Psoas muscle (tissue), 8 donors: ENCODE measurements at regions of chr6 and their contacts with region 1.

Region 1: DNA sequence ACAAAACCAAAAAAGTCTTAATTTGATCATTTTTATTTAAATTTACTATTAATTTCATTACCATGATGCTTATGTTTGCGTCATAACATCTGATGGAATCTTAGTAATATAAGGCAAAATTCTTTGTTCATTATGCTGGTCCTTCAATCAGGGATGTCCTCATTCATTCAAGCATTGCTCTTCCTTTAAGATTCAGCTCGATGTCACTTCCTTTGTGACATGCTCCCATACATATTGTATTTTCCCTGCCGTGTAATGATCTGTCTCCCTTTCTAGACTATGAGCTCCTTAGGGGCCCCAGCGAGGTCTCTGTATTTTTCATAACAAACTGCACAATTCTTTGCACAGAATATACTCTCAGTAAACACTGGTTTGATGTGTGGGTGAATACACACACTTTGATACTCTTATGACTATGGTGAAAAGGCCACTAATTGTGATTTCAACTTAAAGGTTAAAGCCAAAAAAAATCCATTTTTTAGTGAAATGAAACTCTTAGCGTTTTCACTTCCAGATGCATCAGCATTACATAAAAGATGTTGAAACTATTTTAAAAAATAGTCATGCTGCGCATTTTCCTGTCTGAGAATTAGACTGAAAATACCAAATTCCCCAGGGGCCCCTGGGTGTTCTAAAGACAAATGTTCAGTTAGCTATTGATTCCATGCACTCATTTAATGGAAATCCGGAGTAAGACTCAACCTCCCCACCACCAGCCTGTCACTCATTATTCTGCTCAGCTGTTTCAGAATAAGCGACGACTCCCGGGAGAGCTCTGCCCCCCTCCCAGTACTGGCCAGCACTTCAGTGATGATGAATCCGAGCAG is 169.7 kb downstream of the ATXN1 start:
- DNase-seq: no peak
- ATAC-seq: no peak
- H3K4me3 ChIP-seq: no peak overlapping the region
- H3K27ac ChIP-seq: no peak overlapping the region
- H3K4me1 ChIP-seq: no peaks in the 10 kb centered on the region
- H3K27me3 ChIP-seq: no peaks in the 10 kb centered on the region
- CTCF ChIP-seq: no peak

Region 2: GRCh38 chr6:16438718-16439591 is 152.7 kb before region 1 on chr6:
- intact Hi-C with region 1: no loop called
- DNase-seq: no peak
- ATAC-seq: peak; percentile 56 to 84 (median 72)
- H3K4me3 ChIP-seq: no peak overlapping the region
- H3K27ac ChIP-seq: peak overlapping the region; percentile 54
- H3K4me1 ChIP-seq: peaks cover 22% of the 10 kb centered on the region
- H3K27me3 ChIP-seq: no peaks in the 10 kb centered on the region
- CTCF ChIP-seq: no peak

Region 3: DNA sequence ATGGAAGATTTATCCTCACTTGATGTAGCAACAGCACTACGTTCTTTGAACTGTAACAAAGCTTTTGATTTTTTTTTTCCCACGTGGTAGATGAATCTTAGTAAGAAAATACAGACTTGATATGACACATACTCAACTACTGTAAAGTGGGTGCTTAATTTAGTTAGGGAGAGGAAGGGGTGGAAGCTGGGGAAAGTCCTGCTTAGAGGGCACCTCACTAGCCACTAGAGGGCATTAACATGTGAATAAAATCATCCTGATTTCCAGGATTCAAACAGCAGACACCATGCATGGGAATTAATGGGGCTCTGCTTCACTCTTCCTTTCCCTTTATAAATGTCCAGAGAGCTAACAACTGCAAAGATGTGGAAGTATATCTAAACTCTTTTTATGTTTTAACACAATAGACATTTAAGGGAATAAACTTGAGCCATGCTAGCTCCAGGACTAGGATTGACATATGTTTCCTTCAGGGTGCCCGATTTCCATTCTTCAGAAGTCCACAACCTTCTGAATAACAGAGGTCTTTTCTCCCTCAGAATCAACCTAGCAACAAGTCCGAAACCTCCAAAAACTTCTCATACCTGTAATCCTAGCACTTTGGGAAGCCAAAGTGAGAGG is 80.5 kb before region 1 on chr6:
- intact Hi-C with region 1: no loop called
- DNase-seq: no peak
- ATAC-seq: peak; percentile 51 to 70 (median 62)
- H3K4me3 ChIP-seq: no peak overlapping the region
- H3K27ac ChIP-seq: no peak overlapping the region
- H3K4me1 ChIP-seq: peaks cover 41% of the 10 kb centered on the region
- H3K27me3 ChIP-seq: no peaks in the 10 kb centered on the region
- CTCF ChIP-seq: peak; percentile 58

Region 4: DNA sequence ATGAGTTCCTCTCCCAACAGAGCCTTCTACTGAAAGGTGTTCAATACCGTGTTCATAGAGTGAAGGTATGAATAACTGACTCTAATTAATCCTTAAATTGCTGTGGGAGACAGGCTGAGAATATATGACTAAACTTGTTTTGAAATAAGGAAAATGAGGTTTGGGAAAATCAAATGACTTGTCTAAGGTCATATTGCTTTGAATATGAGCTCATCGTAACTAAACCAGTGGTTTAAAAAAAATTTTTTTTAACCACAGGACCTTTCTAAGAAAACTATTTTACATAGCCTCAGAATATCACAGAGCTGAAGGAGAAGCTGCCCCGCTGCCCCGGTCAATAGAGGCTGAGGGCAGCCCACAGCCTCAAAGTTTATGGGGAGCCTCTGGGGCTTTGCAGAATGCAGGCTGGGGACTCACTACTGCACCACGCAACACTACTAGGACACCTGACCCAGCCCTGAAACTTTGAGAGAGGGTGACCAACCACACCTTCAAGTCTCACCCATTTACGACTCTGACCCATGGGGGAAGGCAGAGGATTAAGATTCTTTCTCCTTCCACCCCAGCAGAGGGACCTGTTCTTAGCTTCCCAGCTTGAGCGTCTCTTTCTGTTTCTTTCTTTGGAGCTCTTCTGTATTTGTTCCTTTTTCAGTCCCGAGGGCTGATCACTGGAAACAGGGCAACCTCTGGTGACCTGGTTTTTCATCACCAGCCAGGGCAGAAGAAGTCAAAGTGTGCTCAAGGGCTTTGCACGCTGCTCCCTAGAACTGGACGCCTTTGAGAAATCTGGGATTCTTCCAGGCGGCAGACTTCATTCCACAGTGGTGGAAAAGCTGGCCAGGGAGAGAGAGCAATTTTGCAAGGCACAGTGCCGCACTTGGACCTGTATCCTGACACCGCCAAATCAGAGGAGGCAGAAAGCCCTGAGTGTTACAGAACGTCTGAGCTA is 50.5 kb before region 1 on chr6:
- intact Hi-C with region 1: no loop called
- DNase-seq: peak; percentile 31 to 63
- ATAC-seq: peak; percentile 55 to 75 (median 72)
- H3K4me3 ChIP-seq: no peak overlapping the region
- H3K27ac ChIP-seq: peak overlapping the region; percentile 43
- H3K4me1 ChIP-seq: peaks cover 36% of the 10 kb centered on the region
- H3K27me3 ChIP-seq: no peaks in the 10 kb centered on the region
- CTCF ChIP-seq: no peak

Region 5: GRCh38 chr6:16559071-16559470 is 32.5 kb before region 1 on chr6:
- intact Hi-C with region 1: loop called in 1 of 2 experiments (anchors 2 kb)
- DNase-seq: no peak
- ATAC-seq: peak in 2 of 4 donors; percentile 45 to 62
- H3K4me3 ChIP-seq: no peak overlapping the region
- H3K27ac ChIP-seq: no peak overlapping the region
- H3K4me1 ChIP-seq: peaks cover 17% of the 10 kb centered on the region
- H3K27me3 ChIP-seq: no peaks in the 10 kb centered on the region
- CTCF ChIP-seq: no peak

Region 6: DNA sequence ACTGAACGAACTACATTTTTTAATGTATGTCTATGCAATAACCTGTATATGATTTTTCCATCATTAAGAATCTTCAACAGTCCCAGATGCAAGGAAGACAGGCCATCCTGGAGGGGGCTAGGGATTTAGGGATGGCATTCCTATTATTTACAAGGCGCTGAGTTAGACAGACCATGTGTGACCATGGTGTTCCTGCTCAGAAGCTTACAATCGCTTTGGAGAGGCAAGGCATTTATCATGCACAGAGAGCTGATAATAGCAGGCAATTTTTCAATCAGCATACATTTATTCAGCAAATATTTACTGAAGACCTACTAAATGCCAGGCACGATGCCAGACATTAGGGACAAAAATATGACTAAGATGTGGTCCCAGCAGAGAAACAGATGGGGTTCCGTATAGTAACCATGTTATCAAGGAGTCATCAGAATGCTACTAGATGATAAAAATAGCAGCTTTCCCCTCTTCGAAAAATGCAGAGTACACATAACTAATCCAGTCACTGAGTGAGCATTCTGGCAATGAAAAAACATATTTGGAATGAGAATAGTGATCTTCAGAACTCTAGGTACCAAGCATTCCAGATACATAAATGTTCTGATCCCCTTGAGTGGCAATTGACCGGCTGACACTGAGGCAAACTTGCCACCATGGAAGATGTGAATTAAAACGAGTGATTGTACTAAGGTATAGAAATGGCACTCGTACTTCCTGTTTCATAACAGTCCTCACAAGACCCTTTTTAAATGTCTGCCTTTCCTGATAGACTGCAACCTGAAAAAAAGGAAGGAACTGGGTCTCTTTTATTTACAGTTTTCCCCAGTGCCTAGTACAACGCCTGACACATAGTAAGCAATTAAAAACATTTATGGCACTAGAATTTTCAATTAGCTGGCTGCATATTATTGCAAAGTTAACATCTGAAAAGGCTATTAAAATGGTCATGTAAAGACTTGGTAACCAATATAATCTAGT is 34.0 kb after region 1 on chr6:
- intact Hi-C with region 1: no loop called
- DNase-seq: no peak
- ATAC-seq: no peak
- H3K4me3 ChIP-seq: no peak overlapping the region
- H3K27ac ChIP-seq: no peak overlapping the region
- H3K4me1 ChIP-seq: peaks cover 21% of the 10 kb centered on the region
- H3K27me3 ChIP-seq: no peaks in the 10 kb centered on the region
- CTCF ChIP-seq: no peak